ENCODE measurements at regions of chr22 and their contacts with region 1.

Region 1: GRCh38 chr22:43385770-43386641 is 25.8 kb upstream of the MPPED1 start:
- DNase-seq: peak; percentile 59 to 74 (median 61)
- H3K4me3 ChIP-seq: peak overlapping the region in 1 of 3 experiments; percentile 23
- H3K4me3 Mint-ChIP-seq: peak overlapping the region in 1 of 2 donors; percentile 67
- H3K27ac ChIP-seq: no peak overlapping the region
- H3K27ac Mint-ChIP-seq: no peak overlapping the region
- H3K4me1 ChIP-seq: peaks cover 6 to 14% of the 10 kb centered on the region in 2 donors
- H3K4me1 Mint-ChIP-seq: peaks cover 14% of the 10 kb centered on the region
- H3K27me3 ChIP-seq: no peaks in the 10 kb centered on the region
- H3K27me3 Mint-ChIP-seq: peaks cover 15 to 24% (median 18%) of the 10 kb centered on the region in 3 donors
- CTCF ChIP-seq: peak; percentile 92

Region 2: GRCh38 chr22:43230971-43231723 is 154.9 kb before region 1 on chr22:
- intact Hi-C with region 1: loop called (anchors 1 to 2 kb)
- DNase-seq: peak; percentile 19 to 45 (median 32)
- H3K4me3 ChIP-seq: no peak overlapping the region
- H3K4me3 Mint-ChIP-seq: no peak overlapping the region
- H3K27ac ChIP-seq: no peak overlapping the region
- H3K27ac Mint-ChIP-seq: no peak overlapping the region
- H3K4me1 ChIP-seq: no peaks in the 10 kb centered on the region
- H3K4me1 Mint-ChIP-seq: peaks cover 5% of the 10 kb centered on the region
- H3K27me3 ChIP-seq: no peaks in the 10 kb centered on the region
- H3K27me3 Mint-ChIP-seq: peaks cover 2 to 3% (median 3%) of the 10 kb centered on the region in 3 donors
- CTCF ChIP-seq: peak; percentile 96

Measured in CD14-positive monocyte (primary cell).